ENCODE measurements at regions of chr7 and their contacts with region 1.

Region 1: GRCh38 chr7:12524794-12525386 is 45.6 kb upstream of the SCIN start:
- DNase-seq: no peak
- ATAC-seq: peak; percentile 50

Region 2: GRCh38 chr7:12623897-12624498 is 99.1 kb after region 1 on chr7:
- intact Hi-C with region 1: loop called in 1 of 2 experiments (anchors 10 kb)
- DNase-seq: no peak
- ATAC-seq: peak; percentile 70